Activated T-helper 2 cell treated with anti-CD3 and anti-CD28 coated beads, Interferon-gamma antibody, Interleukin-2, Interleukin-4, amounts not matched to agents 10 μg/mL and 5 μg/mL and 100 μg/mL, durations not matched to agents 14 hours and 24 hours and 36 hours (primary cell): ENCODE measurements at regions of chr20 and their contacts with region 1.

Region 1: DNA sequence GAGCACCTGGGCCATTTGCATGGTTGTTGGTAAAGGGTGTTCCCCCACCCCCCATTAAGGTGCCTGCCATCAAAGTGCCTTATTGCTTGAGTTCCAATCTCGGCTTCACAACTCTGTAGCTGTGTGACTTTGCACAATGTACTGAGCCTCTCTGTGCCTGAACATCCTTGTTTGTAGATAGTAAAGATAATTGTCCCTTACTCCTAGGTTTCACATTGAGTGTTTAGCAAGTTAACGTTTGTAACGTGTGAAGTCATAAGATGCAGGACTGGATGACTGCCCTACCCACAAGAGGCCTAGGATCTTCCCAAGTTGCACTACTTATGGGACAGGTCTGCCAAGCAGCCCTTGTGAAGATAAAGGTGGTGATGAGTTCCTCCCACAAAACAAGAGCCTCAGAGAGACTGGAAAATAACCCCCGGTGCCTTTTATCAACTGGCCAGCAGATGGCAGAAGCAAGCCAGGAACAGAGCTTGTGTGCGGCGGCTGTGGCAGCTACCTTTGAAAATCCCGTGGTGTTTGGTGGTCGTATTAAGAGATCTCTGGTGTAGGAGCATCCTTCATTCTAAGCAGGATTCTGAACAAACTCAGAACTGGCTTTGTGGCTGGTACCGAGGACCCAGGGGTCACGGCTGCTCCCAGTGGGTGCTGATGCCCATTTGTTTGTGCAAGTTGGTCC is 99.0 kb downstream of the CDH26 start:
- DNase-seq: peak; percentile 57
- H3K4me3 Mint-ChIP-seq: peak overlapping the region; percentile 70
- H3K27ac Mint-ChIP-seq: peak overlapping the region; percentile 85
- H3K4me1 Mint-ChIP-seq: peaks cover 38% of the 10 kb centered on the region
- H3K27me3 Mint-ChIP-seq: peaks cover 5% of the 10 kb centered on the region

Region 2: DNA sequence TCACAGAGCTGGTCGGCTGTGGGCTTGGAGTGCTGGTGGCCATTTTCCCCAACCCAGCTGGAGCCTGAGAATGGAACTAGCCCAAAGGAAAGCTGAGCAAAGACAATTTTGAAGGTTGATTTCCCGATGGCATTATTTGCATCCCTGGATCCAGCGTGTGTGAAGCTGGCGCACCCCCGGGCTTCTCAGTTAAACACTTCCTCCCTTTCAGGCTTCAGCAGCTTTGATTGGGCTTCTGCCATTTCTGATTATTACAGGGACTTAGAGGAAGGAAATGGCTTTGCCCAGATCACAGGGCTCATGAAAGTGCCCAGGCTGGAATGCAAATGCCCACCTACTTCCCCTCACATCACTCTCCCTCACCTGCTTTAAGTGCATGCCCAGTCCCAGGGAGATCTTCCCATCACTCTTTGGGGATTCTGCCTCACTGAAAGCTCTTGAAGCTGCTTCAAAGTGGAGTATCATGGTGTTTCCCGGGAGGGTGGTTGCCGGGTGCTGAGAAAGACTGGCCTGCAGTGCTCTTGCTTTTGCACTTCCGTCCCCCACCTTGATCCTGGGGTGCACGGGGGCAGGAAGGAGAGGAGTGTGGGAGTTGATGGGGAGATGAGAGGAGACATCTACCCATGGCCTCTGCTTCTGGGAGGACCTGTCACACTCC is 424.7 kb before region 1 on chr20:
- intact Hi-C with region 1: no loop called
- DNase-seq: no peak
- H3K4me3 Mint-ChIP-seq: no peak overlapping the region
- H3K27ac Mint-ChIP-seq: no peak overlapping the region
- H3K4me1 Mint-ChIP-seq: no peaks in the 10 kb centered on the region
- H3K27me3 Mint-ChIP-seq: no peaks in the 10 kb centered on the region

Region 3: DNA sequence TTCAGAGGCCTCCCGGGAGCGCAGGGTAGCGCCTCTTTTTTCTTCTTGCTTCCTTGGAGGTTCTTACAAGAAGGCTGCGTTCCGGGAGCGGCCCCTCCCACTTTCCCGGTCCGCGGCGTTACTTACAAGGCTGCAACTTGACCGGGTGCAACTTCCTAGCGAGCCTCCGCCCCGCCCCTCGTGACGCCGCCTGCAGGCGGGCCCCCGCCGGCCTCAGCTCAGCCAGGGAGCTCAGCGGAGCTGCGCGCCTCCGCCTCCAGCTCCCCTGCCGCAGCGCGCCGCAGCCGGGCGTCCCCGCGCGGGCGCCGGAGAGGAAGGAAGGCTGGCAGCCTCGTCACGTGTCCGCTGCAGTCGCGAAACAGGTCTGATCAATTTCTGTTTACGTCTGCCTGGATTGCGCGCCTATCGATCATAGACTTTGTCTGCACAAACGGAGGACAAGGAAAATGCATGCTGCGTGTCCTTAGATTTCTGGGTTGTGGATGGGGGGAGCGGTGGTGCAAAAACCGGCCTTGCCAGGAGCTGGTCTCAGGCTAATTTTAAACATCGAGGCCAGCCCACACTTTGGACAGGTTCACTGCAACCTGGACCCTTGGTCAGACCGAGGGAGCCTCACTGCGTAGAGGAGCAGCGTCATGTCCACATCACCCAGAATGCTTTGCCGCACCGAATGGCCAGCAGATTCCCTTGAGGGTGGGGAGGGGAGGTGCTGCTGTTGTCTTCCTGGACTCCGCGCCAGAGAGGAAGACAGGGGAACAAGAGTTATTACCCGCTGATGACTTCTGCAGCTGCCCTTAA is 116.9 kb before region 1 on chr20 and contains the starts of genes FAM217B and PPP1R3D:
- intact Hi-C with region 1: loop called (anchors 2 kb)
- DNase-seq: peak; percentile 90
- H3K4me3 Mint-ChIP-seq: peak within 1 kb of the TSS; percentile 94
- H3K27ac Mint-ChIP-seq: peak within 1 kb of the TSS; percentile 98
- H3K4me1 Mint-ChIP-seq: peaks cover 33% of the 10 kb centered on the region
- H3K27me3 Mint-ChIP-seq: no peaks in the 10 kb centered on the region
- total RNA-seq, gene FAM217B: 27.8 and 28.8 TPM in 2 replicates
- total RNA-seq, gene PPP1R3D: 6.4 and 6.6 TPM in 2 replicates

Region 4: GRCh38 chr20:60142587-60142986 is 85.3 kb after region 1 on chr20:
- intact Hi-C with region 1: no loop called
- DNase-seq: no peak
- H3K4me3 Mint-ChIP-seq: no peak overlapping the region
- H3K27ac Mint-ChIP-seq: no peak overlapping the region
- H3K4me1 Mint-ChIP-seq: peaks cover 5% of the 10 kb centered on the region
- H3K27me3 Mint-ChIP-seq: no peaks in the 10 kb centered on the region

Region 5: DNA sequence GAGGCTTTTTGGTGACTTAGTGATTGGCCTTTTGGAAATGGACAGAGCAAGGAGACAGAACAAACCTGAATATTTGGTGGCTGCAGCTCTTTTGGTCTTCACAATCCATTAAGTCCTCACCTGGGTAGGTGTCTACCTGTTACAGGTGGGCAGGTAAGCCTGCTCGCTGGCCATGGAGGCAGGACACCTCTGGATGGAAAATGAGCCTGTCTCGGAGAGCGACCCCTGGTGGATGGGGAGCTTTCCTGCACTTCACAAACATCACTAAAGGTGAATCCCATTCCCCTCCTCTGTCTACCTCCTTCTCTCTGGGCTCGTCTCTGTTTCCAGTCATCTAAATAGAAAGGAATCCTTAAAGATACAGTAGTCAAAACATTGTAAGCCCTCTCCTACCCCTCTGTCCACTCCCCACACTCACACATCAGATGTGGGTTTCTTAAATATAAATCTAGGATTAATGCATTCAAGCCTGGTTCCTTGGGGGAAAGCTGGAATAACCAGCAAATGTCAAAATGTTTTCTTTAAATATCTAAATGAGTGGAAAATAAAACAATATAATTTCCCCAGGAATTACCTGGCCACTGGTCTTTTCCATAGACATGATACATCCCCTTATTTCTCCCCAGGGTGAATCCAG is 205.8 kb after region 1 on chr20:
- intact Hi-C with region 1: loop called (anchors 10 kb)
- DNase-seq: peak; percentile 16
- H3K4me3 Mint-ChIP-seq: no peak overlapping the region
- H3K27ac Mint-ChIP-seq: no peak overlapping the region
- H3K4me1 Mint-ChIP-seq: no peaks in the 10 kb centered on the region
- H3K27me3 Mint-ChIP-seq: no peaks in the 10 kb centered on the region

Region 6: DNA sequence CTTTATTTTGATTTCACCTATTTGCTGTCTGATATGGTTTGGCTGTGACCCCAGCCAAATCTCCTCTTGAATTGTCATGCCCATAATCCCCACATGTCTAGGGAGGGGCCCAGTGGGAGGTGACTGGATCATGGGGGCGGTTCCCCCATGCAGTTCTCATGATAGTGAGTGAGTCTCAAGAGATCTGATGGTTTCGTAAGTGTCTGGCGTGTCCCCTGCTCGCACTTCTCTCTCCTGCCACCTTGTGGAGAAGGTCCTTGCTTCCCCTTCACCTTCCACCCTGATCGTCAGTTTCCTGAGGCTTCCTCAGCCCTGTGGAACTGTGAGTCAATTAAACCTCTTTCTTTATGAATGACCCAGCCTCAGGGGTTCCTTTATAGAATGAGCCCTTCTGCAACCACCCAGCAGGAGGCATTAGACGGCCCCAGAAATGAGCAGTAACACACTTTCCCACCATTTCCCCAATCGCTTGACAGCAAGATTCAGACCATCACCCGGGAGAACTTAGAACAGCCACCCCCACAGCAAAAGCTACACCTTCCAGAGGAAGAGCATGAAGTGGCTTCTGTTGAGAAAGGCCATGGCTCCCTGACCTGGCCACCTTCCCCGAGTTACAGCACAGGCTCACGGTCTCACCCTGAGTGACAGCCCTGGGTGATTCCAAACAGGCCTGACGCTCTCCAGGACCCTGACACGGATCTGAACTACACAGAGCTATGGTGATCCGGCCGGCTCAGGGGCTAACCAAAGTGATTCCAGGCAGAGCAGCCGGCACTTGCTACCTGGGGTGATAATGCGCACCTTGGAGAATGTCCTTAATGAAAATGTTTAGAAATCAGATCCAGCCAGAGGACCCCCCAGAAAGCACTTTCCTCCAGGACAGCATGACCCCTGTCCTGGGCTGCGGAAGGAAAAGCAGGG is 1063.6 kb after region 1 on chr20:
- intact Hi-C with region 1: loop called (anchors 5 kb)
- DNase-seq: no peak
- H3K4me3 Mint-ChIP-seq: no peak overlapping the region
- H3K27ac Mint-ChIP-seq: no peak overlapping the region
- H3K4me1 Mint-ChIP-seq: no peaks in the 10 kb centered on the region
- H3K27me3 Mint-ChIP-seq: no peaks in the 10 kb centered on the region